PC-3 (cell line): ENCODE measurements at regions of chr1 and their contacts with region 1.

Region 1: DNA sequence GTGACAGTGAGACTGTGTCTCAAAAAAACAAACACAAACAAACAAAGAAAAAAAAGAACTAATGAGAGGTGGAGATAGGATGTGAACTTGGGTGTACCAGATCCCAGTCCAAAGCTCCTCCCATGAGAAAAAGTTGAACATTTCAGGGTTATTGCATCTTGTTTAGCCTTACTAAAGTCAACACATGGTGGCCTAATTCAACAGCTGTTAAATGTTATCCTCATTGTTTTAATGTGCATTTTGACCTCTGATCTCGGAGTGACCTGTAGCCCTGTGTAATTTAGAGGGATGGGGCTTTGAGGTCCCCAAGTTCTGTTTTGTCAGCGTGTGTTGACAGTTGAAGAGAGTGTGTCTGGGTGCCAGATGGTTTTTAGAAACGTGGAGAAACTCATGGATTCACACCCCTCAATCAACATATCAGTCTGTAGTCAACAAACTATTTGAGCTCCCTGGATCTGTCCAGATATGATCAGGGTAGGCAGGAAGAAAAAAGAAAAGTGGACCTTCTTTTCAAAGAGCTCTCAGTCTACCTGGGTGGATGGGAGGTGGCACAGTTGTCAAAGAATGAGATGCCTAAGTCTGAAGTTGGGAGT is 34.7 kb downstream of the PTPRU start:
- DNase-seq: no peak
- ATAC-seq: peak; percentile 2; the same call in 1 of the 2 replicates
- H3K4me3 ChIP-seq: no peak overlapping the region; the same call in 1 of the 2 replicates
- H3K27ac ChIP-seq: peak overlapping the region; percentile 31
- H3K4me1 ChIP-seq: peaks cover 19% of the 10 kb centered on the region
- H3K27me3 ChIP-seq: no peaks in the 10 kb centered on the region
- CTCF ChIP-seq: no peak

Region 2: GRCh38 chr1:29319300-29320110 is 48.5 kb after region 1 on chr1:
- CTCF ChIA-PET with region 1: interaction called, 11 read pairs
- POLR2A ChIA-PET with region 1: no interaction called
- intact Hi-C with region 1: no loop called
- DNase-seq: no peak
- ATAC-seq: no peak
- H3K4me3 ChIP-seq: no peak overlapping the region
- H3K27ac ChIP-seq: no peak overlapping the region
- H3K4me1 ChIP-seq: no peaks in the 10 kb centered on the region
- H3K27me3 ChIP-seq: no peaks in the 10 kb centered on the region
- CTCF ChIP-seq: no peak